Caco-2 (cell line): ENCODE measurements at regions of chr1 and their contacts with region 1.

Region 1: DNA sequence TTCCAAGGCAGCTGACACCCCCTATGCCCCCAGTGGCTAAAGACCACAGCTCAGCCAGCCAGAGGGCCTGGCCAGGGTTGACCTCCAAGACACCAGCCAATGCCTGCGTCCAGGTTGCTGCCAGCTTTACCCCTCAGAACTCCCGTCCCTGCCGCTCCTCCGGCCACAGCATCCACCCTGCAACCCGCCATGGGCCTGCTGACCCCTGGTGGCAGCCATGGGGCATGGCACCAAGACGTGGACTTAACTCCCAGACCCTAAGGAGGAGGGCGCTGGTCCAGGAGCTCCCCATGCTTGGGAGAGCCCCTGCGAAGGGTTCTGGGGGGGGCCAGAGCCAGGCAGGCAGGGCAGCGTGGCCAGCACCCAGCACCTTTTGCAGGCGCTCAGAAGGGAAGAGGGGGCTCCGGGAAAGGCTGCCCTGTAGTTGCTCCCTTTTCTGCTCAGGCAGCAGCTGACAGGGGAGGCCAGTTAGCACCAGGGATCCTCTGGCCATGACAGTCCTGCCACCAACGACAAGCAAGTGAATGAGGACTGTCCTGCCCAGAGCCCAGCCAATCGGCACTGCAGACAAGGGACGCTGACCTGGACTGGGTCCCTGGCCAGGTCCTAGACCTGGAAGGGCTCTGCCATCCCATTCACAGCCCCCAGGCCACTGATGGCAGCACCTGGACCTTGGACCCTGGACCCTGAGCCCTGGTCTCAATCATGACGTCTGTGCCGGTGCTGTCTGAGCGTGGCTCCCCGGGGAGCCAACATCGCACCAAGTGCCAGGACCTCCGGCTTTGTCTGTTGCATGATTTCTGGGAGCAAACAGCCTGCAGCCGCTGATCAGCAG is 246.2 kb downstream of the NPHP4 start:
- DNase-seq: peak; percentile 73 to 84
- H3K4me3 ChIP-seq: no peak overlapping the region
- H3K4me3 Mint-ChIP-seq: no peak overlapping the region
- H3K27ac Mint-ChIP-seq: no peak overlapping the region
- H3K4me1 ChIP-seq: peaks cover 13% of the 10 kb centered on the region
- H3K4me1 Mint-ChIP-seq: peaks cover 20% of the 10 kb centered on the region
- H3K27me3 ChIP-seq: no peaks in the 10 kb centered on the region
- H3K27me3 Mint-ChIP-seq: no peaks in the 10 kb centered on the region
- CTCF ChIP-seq: peak; percentile 86 to 91

Region 2: GRCh38 chr1:5514519-5515183 is 231.3 kb before region 1 on chr1:
- CTCF ChIA-PET with region 1: interaction called, 20 read pairs
- POLR2A ChIA-PET with region 1: no interaction called
- intact Hi-C with region 1: loop called (anchors 1 kb)
- DNase-seq: peak in 1 of 2 experiments; percentile 79
- H3K4me3 ChIP-seq: no peak overlapping the region
- H3K4me3 Mint-ChIP-seq: no peak overlapping the region
- H3K27ac Mint-ChIP-seq: no peak overlapping the region
- H3K4me1 ChIP-seq: no peaks in the 10 kb centered on the region
- H3K4me1 Mint-ChIP-seq: no peaks in the 10 kb centered on the region
- H3K27me3 ChIP-seq: no peaks in the 10 kb centered on the region; the same call in 1 of the 2 replicates
- H3K27me3 Mint-ChIP-seq: peaks cover 5% of the 10 kb centered on the region
- CTCF ChIP-seq: peak; percentile 89 to 96

Region 3: GRCh38 chr1:5620990-5621389 is 125.0 kb before region 1 on chr1:
- CTCF ChIA-PET with region 1: interaction called, 8 read pairs
- POLR2A ChIA-PET with region 1: no interaction called
- intact Hi-C with region 1: loop called (anchors 5 kb)
- DNase-seq: peak in 1 of 2 experiments; percentile 56
- H3K4me3 ChIP-seq: no peak overlapping the region
- H3K4me3 Mint-ChIP-seq: no peak overlapping the region
- H3K27ac Mint-ChIP-seq: no peak overlapping the region
- H3K4me1 ChIP-seq: no peaks in the 10 kb centered on the region
- H3K4me1 Mint-ChIP-seq: no peaks in the 10 kb centered on the region
- H3K27me3 ChIP-seq: no peaks in the 10 kb centered on the region
- H3K27me3 Mint-ChIP-seq: peaks cover 19% of the 10 kb centered on the region
- CTCF ChIP-seq: peak; percentile 57 to 72

Region 4: GRCh38 chr1:5637171-5637570 is 108.8 kb before region 1 on chr1:
- CTCF ChIA-PET with region 1: interaction called, 4 read pairs
- POLR2A ChIA-PET with region 1: no interaction called
- intact Hi-C with region 1: loop called (anchors 1 kb)
- DNase-seq: peak in 1 of 2 experiments; percentile 40
- H3K4me3 ChIP-seq: no peak overlapping the region
- H3K4me3 Mint-ChIP-seq: no peak overlapping the region
- H3K27ac Mint-ChIP-seq: no peak overlapping the region
- H3K4me1 ChIP-seq: no peaks in the 10 kb centered on the region
- H3K4me1 Mint-ChIP-seq: no peaks in the 10 kb centered on the region
- H3K27me3 ChIP-seq: no peaks in the 10 kb centered on the region
- H3K27me3 Mint-ChIP-seq: no peaks in the 10 kb centered on the region
- CTCF ChIP-seq: peak; percentile 23 to 34

Region 5: GRCh38 chr1:5718831-5719632 is 27.0 kb before region 1 on chr1:
- CTCF ChIA-PET with region 1: interaction called, 18 read pairs
- POLR2A ChIA-PET with region 1: no interaction called
- intact Hi-C with region 1: loop called (anchors 1 kb)
- DNase-seq: peak in 1 of 2 experiments; percentile 17
- H3K4me3 ChIP-seq: no peak overlapping the region
- H3K4me3 Mint-ChIP-seq: no peak overlapping the region
- H3K27ac Mint-ChIP-seq: peak overlapping the region; percentile 95
- H3K4me1 ChIP-seq: peaks cover 30% of the 10 kb centered on the region
- H3K4me1 Mint-ChIP-seq: peaks cover 6% of the 10 kb centered on the region
- H3K27me3 ChIP-seq: no peaks in the 10 kb centered on the region
- H3K27me3 Mint-ChIP-seq: no peaks in the 10 kb centered on the region
- CTCF ChIP-seq: no peak

Region 6: GRCh38 chr1:5727871-5728643 is 17.9 kb before region 1 on chr1:
- CTCF ChIA-PET with region 1: interaction called, 12 read pairs
- POLR2A ChIA-PET with region 1: no interaction called
- intact Hi-C with region 1: no loop called
- DNase-seq: no peak
- H3K4me3 ChIP-seq: no peak overlapping the region
- H3K4me3 Mint-ChIP-seq: peak overlapping the region; percentile 45
- H3K27ac Mint-ChIP-seq: peak overlapping the region; percentile 72
- H3K4me1 ChIP-seq: peaks cover 48% of the 10 kb centered on the region
- H3K4me1 Mint-ChIP-seq: peaks cover 23% of the 10 kb centered on the region
- H3K27me3 ChIP-seq: no peaks in the 10 kb centered on the region
- H3K27me3 Mint-ChIP-seq: no peaks in the 10 kb centered on the region
- CTCF ChIP-seq: no peak

Region 7: DNA sequence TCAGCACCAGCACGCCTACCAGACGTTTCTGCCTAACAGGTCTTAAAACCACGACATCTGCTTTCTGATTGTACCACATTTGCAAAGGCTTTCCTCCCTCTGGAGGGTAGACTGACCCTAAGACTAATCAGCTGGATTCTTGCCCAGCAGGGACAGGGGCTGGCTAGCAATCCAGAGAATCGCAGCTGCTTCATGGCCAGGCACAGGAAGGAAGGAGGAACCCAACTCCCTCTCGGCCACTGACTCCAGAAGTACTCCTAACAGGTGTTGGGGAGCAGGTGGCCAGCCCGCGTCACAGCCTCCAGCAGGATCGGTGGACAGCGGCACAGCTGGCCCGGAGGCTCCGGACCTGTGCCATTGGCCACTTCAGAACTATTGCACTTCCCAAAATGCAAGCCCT is 65.4 kb after region 1 on chr1:
- CTCF ChIA-PET with region 1: no interaction called
- POLR2A ChIA-PET with region 1: no interaction called
- intact Hi-C with region 1: no loop called
- DNase-seq: no peak
- H3K4me3 ChIP-seq: no peak overlapping the region
- H3K4me3 Mint-ChIP-seq: no peak overlapping the region
- H3K27ac Mint-ChIP-seq: no peak overlapping the region
- H3K4me1 ChIP-seq: no peaks in the 10 kb centered on the region
- H3K4me1 Mint-ChIP-seq: no peaks in the 10 kb centered on the region
- H3K27me3 ChIP-seq: no peaks in the 10 kb centered on the region
- H3K27me3 Mint-ChIP-seq: peaks cover 4% of the 10 kb centered on the region
- CTCF ChIP-seq: no peak